IMR-90 (cell line): ENCODE measurements at regions of chr2 and their contacts with region 1.

Region 1: DNA sequence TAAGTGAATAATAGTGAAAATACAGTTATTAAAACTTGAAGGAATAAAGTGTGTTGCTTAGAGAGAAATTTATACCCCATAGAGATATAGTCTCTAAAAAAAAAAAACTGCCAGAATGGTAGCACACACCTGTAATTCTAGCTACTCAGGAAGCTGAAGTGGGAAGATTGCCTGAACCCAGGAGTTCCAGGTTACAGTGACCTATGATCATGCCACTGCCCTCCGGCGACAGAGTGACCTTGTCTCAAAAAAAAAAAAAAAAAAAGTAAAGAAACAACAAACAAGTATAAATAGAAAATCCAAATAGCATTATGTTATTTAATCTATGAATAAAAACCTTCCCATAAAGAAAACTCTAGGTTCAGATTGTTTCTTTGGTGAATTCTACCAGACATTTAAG is 7.4 kb upstream of the AGPS start:
- DNase-seq: no peak
- ATAC-seq: no peak
- H3K4me3 ChIP-seq: no peak overlapping the region
- H3K27ac ChIP-seq: no peak overlapping the region
- H3K4me1 ChIP-seq: no peaks in the 10 kb centered on the region
- H3K27me3 ChIP-seq: no peaks in the 10 kb centered on the region
- CTCF ChIP-seq: no peak
- POLR2A ChIP-seq: no peak
- RAD21 ChIP-seq: no peak

Region 2: DNA sequence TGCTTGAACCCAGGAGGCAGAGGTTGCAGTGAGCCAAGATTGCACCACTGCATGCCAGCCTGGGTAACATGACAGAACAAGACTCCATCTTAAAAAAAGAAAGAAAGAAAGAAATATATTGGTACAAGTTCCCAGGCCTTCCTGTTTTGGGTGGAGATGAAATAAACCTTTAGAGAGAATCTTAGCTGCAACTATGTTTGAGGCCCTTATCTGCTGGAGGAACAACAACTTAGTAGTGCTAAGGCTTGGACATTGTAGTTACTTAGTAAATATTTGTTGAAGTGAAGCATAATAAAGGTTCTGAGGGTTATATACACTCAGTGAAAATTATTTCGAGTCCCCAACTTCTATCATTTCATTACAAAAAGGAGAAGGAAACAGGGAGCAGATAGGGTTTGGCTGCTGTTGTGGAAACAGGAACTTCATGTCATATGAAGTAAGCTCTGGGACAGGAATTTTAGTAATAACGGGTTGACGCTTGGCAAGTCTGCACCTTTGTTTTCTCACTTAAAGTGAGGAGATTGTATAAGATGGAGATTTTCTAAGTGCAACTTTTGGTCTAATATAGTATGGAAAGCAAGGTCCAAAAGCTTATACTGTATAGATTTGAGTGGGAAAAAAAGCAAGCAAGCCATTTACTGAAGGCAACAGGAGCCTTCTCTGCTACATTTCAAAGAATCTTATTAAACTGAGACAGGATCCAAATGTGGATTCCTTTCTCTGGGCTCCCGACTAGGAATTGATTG is 32.5 kb before region 1 on chr2:
- CTCF ChIA-PET with region 1: no interaction called
- POLR2A ChIA-PET with region 1: no interaction called
- dilution Hi-C with region 1: no loop called
- in situ Hi-C with region 1: no loop called
- intact Hi-C with region 1: loop called (anchors 5 kb)
- DNase-seq: no peak
- ATAC-seq: no peak; the same call in 1 of the 2 replicates
- H3K4me3 ChIP-seq: no peak overlapping the region
- H3K27ac ChIP-seq: no peak overlapping the region
- H3K4me1 ChIP-seq: peaks cover 2% of the 10 kb centered on the region; the same call in 1 of the 2 replicates
- H3K27me3 ChIP-seq: no peaks in the 10 kb centered on the region
- CTCF ChIP-seq: no peak
- POLR2A ChIP-seq: no peak
- RAD21 ChIP-seq: no peak